ENCODE measurements at regions of chr7 and their contacts with region 1.

Region 1: GRCh38 chr7:25963733-25964132 is 188.3 kb upstream of the NFE2L3 start:
- DNase-seq: no peak
- H3K4me3 Mint-ChIP-seq: no peak overlapping the region
- H3K27ac Mint-ChIP-seq: no peak overlapping the region
- H3K4me1 Mint-ChIP-seq: peaks cover 20% of the 10 kb centered on the region
- H3K27me3 Mint-ChIP-seq: peaks cover 90% of the 10 kb centered on the region
- CTCF ChIP-seq: no peak

Region 2: DNA sequence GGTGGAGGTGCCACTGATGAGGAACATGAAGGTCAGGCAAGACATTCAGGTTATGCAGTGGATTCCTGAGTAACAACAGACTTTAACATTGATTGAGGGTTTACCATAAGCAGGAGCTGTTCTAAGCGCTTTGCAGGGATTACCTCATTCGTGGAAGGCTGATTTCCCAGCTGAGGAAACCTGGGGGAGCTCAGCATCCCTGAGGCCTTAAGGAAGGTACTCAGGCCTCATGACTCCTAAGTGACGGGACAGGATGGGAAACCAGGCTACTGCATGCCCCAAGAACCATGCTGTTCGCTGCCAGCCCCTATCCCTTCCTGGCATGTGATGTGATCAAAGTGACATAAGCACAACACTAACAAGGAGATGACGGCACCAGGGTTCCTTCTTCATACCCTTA is 44.7 kb after region 1 on chr7:
- CTCF ChIA-PET with region 1: interaction called, 10 read pairs
- intact Hi-C with region 1: no loop called
- DNase-seq: no peak
- H3K4me3 Mint-ChIP-seq: no peak overlapping the region
- H3K27ac Mint-ChIP-seq: no peak overlapping the region
- H3K4me1 Mint-ChIP-seq: no peaks in the 10 kb centered on the region
- H3K27me3 Mint-ChIP-seq: peaks cover 79% of the 10 kb centered on the region
- CTCF ChIP-seq: no peak

Measured in Calu3 (cell line).